Heart right ventricle (tissue), 16 donors: ENCODE measurements at regions of chr3 and their contacts with region 1.

Region 1: GRCh38 chr3:29525254-29525881 is 244.5 kb downstream of the RBMS3 start:
- DNase-seq: peak; percentile 32 to 75
- ATAC-seq: peak; percentile 91 to 96 (median 94)
- H3K4me3 ChIP-seq: peak overlapping the region in 1 of 10 donors; percentile 6
- H3K27ac ChIP-seq: peak overlapping the region; percentile 32 to 86 (median 68)
- H3K4me1 ChIP-seq: peaks cover 11 to 66% (median 35%) of the 10 kb centered on the region in 9 donors
- H3K27me3 ChIP-seq: no peaks in the 10 kb centered on the region
- CTCF ChIP-seq: no peak

Region 2: GRCh38 chr3:29324180-29324651 is 201.2 kb before region 1 on chr3:
- intact Hi-C with region 1: loop called in 1 of 10 experiments (anchors 10 kb)
- DNase-seq: peak; percentile 14 to 67
- ATAC-seq: peak; percentile 65 to 93 (median 88)
- H3K4me3 ChIP-seq: peak overlapping the region in 8 of 10 donors; percentile 5 to 40 (median 34)
- H3K27ac ChIP-seq: peak overlapping the region; percentile 4 to 83 (median 74)
- H3K4me1 ChIP-seq: peaks cover 4 to 74% (median 42%) of the 10 kb centered on the region in 9 donors
- H3K27me3 ChIP-seq: no peaks in the 10 kb centered on the region
- CTCF ChIP-seq: no peak

Region 3: GRCh38 chr3:29436612-29437323 is 88.6 kb before region 1 on chr3:
- intact Hi-C with region 1: loop called in 1 of 10 experiments (anchors 5 kb)
- DNase-seq: no peak
- ATAC-seq: no peak
- H3K4me3 ChIP-seq: no peak overlapping the region
- H3K27ac ChIP-seq: no peak overlapping the region
- H3K4me1 ChIP-seq: peaks cover 0 to 51% (median 10%) of the 10 kb centered on the region in 9 donors
- H3K27me3 ChIP-seq: no peaks in the 10 kb centered on the region
- CTCF ChIP-seq: no peak

Region 4: DNA sequence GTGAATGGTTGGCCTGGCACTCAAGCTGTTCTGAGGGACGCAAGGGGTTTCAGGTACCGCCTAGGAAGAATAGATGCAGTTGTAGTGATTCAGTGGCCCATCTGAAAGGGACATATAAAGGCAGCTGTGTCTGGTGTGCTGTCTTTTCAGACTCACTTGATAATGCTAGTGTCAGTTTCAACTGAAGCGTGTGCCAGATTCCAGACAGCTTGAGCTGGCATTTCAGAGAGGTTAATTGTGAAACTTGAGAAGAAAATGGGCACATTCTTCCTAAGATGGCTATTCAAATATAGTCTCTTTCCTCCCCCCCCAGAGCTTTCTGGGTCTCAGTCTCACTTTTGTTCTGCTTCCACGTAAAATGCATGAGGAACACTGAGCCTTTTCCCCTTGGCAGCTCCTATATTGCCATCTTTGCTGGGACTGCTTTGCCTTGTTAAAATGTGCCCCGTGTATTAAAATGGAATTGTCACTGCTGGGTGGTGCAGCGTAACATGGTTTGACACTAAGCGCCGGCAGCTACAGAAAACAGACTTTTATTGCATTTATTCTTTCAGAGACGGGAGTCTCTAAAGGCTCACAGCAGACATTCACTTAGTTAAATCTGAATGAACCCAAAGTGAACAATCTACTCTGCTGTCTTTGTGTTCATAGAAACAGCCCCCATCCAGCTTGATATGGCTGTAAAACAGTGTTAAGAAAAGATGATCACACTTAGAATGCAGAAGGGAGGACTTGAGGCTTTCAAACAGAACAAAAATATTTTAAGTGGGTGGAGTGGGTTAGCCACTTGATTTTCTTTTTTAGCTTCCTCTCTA is 234.2 kb after region 1 on chr3:
- intact Hi-C with region 1: loop called in 4 of 10 experiments (anchors 5 to 10 kb)
- DNase-seq: peak in 1 of 2 donors; percentile 9
- ATAC-seq: peak in 7 of 8 donors; percentile 44 to 75 (median 57)
- H3K4me3 ChIP-seq: peak overlapping the region in 2 of 10 donors; percentile 9 to 11
- H3K27ac ChIP-seq: peak overlapping the region; percentile 4 to 88 (median 78)
- H3K4me1 ChIP-seq: peaks cover 11 to 67% (median 57%) of the 10 kb centered on the region in 9 donors
- H3K27me3 ChIP-seq: no peaks in the 10 kb centered on the region
- CTCF ChIP-seq: no peak

Region 5: GRCh38 chr3:29901097-29901496 is 375.7 kb after region 1 on chr3:
- intact Hi-C with region 1: loop called in 1 of 10 experiments (anchors 5 kb)
- DNase-seq: no peak
- ATAC-seq: peak in 4 of 8 donors; percentile 35 to 61 (median 56)
- H3K4me3 ChIP-seq: no peak overlapping the region
- H3K27ac ChIP-seq: peak overlapping the region in 2 of 10 donors; percentile 7 to 22
- H3K4me1 ChIP-seq: peaks cover 0 to 19% (median 4%) of the 10 kb centered on the region in 9 donors
- H3K27me3 ChIP-seq: no peaks in the 10 kb centered on the region
- CTCF ChIP-seq: no peak